HCT116 (cell line): ENCODE measurements at regions of chr5 and their contacts with region 1.

Region 1: GRCh38 chr5:129460936-129461711 is 1.0 kb downstream of the ADAMTS19 start:
- DNase-seq: no peak
- ATAC-seq: no peak
- H3K4me3 ChIP-seq: no peak overlapping the region
- H3K27ac ChIP-seq: no peak overlapping the region
- H3K4me1 ChIP-seq: no peaks in the 10 kb centered on the region
- H3K27me3 ChIP-seq: no peaks in the 10 kb centered on the region
- CTCF ChIP-seq: no peak
- POLR2A ChIP-seq: no peak
- RAD21 ChIP-seq: no peak

Region 2: DNA sequence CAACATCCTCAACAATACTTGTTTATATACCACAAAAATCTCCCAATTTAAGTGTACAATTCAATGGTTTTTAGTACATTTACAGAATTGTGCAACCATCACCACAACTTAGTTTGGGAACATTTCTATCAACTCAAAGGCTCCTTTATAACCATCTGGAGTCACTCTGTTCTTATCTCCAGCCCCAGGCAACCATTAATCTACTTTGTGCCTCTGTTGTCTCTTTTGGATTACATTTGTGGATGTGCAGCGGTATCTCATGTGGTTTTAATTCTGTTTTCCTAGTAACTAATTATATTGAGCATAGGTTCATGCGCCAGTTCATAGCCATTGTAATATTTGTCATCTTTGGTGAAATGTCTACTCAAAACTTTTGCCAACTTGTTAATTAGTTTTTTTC is 13.4 kb after region 1 on chr5:
- CTCF ChIA-PET with region 1: no interaction called
- POLR2A ChIA-PET with region 1: no interaction called
- RAD21 ChIA-PET with region 1: no interaction called
- intact Hi-C with region 1: loop called (anchors 1 kb)
- DNase-seq: no peak
- ATAC-seq: no peak
- H3K4me3 ChIP-seq: no peak overlapping the region
- H3K27ac ChIP-seq: no peak overlapping the region
- H3K4me1 ChIP-seq: no peaks in the 10 kb centered on the region
- H3K27me3 ChIP-seq: no peaks in the 10 kb centered on the region
- CTCF ChIP-seq: no peak
- POLR2A ChIP-seq: no peak
- RAD21 ChIP-seq: no peak